ENCODE measurements at regions of chr15 and their contacts with region 1.

Region 1: GRCh38 chr15:63135804-63136203 is 14.1 kb downstream of the LACTB start:
- DNase-seq: peak; percentile 79
- H3K4me3 Mint-ChIP-seq: no peak overlapping the region
- H3K27ac Mint-ChIP-seq: peak overlapping the region; percentile 91
- H3K4me1 Mint-ChIP-seq: peaks cover 20% of the 10 kb centered on the region
- H3K27me3 Mint-ChIP-seq: no peaks in the 10 kb centered on the region
- CTCF ChIP-seq: no peak

Region 2: DNA sequence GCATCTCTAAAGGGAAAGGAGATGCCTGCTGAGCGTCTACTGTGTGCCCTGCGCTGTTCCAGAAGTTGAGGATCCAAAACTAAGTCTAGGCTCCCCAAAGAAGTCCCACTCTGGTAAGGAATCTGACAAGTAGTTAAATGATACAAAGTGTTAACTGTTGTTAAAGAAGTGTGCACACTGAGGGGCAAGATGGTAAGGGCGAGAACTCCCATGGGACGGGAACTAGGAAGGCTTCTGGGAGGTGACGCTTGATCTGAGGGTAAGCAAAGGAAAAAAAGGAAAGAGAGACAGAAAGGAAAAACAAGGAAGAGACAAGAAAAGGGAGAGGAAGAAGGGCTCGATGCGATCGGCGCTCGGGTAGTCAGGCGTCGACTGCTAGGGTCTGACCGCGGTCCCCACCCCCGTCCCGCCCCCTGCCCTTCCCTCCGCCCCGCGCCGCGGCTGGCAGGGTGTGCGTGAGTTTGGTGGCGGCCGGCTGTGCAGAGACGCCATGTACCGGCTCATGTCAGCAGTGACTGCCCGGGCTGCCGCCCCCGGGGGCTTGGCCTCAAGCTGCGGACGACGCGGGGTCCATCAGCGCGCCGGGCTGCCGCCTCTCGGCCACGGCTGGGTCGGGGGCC is 14.3 kb before region 1 on chr15 and contains the start of gene LACTB:
- CTCF ChIA-PET with region 1: interaction called, 3 read pairs
- POLR2A ChIA-PET with region 1: interaction called, 17 read pairs
- intact Hi-C with region 1: no loop called
- DNase-seq: peak; percentile 89
- H3K4me3 Mint-ChIP-seq: peak within 1 kb of the TSS; percentile 69
- H3K27ac Mint-ChIP-seq: peak within 1 kb of the TSS; percentile 94
- H3K4me1 Mint-ChIP-seq: peaks cover 8% of the 10 kb centered on the region
- H3K27me3 Mint-ChIP-seq: no peaks in the 10 kb centered on the region
- CTCF ChIP-seq: no peak
- total RNA-seq, gene LACTB: 9.9 and 16.3 TPM in 2 replicates

Region 3: GRCh38 chr15:63146669-63147068 is 10.9 kb after region 1 on chr15:
- CTCF ChIA-PET with region 1: interaction called, 4 read pairs
- POLR2A ChIA-PET with region 1: interaction called, 90 read pairs
- intact Hi-C with region 1: no loop called
- DNase-seq: no peak
- H3K4me3 Mint-ChIP-seq: no peak overlapping the region
- H3K27ac Mint-ChIP-seq: no peak overlapping the region
- H3K4me1 Mint-ChIP-seq: peaks cover 6% of the 10 kb centered on the region
- H3K27me3 Mint-ChIP-seq: no peaks in the 10 kb centered on the region
- CTCF ChIP-seq: no peak

Region 4: DNA sequence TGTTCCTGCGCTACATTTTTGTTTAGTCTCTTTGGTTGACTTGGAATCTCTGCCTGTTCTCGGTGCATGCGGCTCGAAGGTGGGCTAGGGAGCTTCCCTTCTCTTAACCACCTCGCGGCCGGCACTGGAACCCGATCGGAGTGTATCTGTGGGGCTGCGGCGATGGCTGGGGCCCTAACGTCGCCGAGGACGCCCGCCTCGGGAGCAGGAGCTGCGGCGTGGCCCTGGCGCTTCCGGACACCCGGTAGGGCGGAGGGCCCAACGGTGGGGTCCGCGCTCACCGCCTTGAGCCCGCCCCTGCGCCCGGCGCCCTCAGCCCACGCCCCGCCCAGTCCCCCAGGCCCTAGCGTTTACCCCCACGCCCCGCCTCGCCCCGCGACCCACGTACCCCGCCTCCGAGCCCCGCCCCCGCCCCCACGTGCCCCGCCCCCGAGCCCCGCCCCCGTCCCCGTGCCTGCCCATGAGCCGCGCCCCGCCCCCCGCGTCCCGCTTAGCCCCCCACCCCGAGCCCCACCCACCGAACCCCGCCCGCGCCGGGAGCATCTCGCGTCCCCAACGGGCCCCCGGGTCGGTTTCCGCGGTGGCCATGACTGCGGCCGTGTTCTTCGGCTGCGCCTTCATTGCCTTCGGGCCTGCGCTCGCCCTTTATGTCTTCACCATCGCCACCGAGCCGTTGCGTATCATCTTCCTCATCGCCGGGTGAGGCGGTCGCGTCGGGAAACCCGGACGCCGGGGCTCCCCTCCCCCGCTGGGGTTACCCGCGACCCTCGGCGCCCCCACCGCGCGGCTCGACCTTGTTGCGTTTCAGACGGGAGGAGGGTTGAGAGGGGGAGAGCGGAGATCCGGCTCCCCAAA is 141.5 kb after region 1 on chr15 and contains the start of gene APH1B:
- CTCF ChIA-PET with region 1: interaction called, 6 read pairs
- POLR2A ChIA-PET with region 1: interaction called, 14 read pairs
- intact Hi-C with region 1: no loop called
- DNase-seq: peak; percentile 62
- H3K4me3 Mint-ChIP-seq: peak within 1 kb of the TSS; percentile 78
- H3K27ac Mint-ChIP-seq: peak within 1 kb of the TSS; percentile 55
- H3K4me1 Mint-ChIP-seq: peaks cover 10% of the 10 kb centered on the region
- H3K27me3 Mint-ChIP-seq: no peaks in the 10 kb centered on the region
- CTCF ChIP-seq: no peak
- total RNA-seq, gene APH1B: 5.2 and 8.2 TPM in 2 replicates

Region 5: GRCh38 chr15:63420333-63420747 is 284.5 kb after region 1 on chr15:
- CTCF ChIA-PET with region 1: no interaction called
- POLR2A ChIA-PET with region 1: no interaction called
- intact Hi-C with region 1: no loop called
- DNase-seq: peak; percentile 39
- H3K4me3 Mint-ChIP-seq: no peak overlapping the region
- H3K27ac Mint-ChIP-seq: no peak overlapping the region
- H3K4me1 Mint-ChIP-seq: peaks cover 8% of the 10 kb centered on the region
- H3K27me3 Mint-ChIP-seq: no peaks in the 10 kb centered on the region
- CTCF ChIP-seq: no peak

Region 6: DNA sequence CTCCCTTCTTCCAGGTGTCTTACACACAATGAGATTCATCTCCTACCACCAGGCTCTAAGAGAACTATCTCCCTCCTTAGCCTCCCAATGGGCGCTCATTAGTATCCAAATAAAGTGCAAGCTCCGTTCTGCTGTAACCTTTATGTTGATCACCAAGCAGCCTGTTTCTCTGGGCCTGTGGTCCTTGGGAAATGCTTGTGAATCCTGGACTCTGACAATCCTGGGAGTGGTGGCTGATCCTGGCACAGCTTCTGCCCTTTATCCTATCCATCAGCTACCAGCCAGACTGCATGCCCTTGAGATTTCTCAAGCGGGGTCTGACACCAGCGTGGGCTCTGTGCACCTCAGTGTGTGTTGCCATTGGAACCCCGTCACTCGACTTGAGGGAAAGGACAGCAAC is 342.4 kb after region 1 on chr15:
- CTCF ChIA-PET with region 1: no interaction called
- POLR2A ChIA-PET with region 1: no interaction called
- intact Hi-C with region 1: no loop called
- DNase-seq: no peak
- H3K4me3 Mint-ChIP-seq: no peak overlapping the region
- H3K27ac Mint-ChIP-seq: no peak overlapping the region
- H3K4me1 Mint-ChIP-seq: peaks cover 27% of the 10 kb centered on the region
- H3K27me3 Mint-ChIP-seq: no peaks in the 10 kb centered on the region
- CTCF ChIP-seq: no peak